Activated CD8-positive, alpha-beta T cell treated with anti-CD3 and anti-CD28 coated beads for 36 hours (primary cell): ENCODE measurements at regions of chr17 and their contacts with region 1.

Region 1: DNA sequence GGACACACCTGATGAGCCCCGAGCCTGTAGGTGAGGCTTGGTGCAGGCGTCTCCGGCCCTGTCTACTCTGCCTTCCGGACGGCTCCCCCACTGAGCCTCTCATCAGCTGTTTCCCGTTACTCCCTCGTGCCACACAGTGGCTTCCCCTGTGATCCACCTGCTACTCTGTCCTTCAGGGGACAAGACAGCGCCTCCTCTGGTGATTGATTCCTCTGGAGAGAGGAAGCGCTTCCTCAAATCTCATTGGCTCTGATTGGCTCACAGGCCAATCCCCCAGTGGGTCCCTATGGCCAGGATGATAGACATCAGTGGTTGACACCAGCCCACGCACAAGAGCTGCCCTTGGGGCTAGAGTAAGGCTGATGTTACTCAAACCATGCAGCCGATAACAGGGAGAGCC is 24.0 kb downstream of the RNF213 start:
- DNase-seq: no peak
- ATAC-seq: no peak
- H3K4me3 Mint-ChIP-seq: no peak overlapping the region
- H3K27ac Mint-ChIP-seq: peak overlapping the region; percentile 53
- H3K4me1 Mint-ChIP-seq: peaks cover 23% of the 10 kb centered on the region
- H3K27me3 Mint-ChIP-seq: no peaks in the 10 kb centered on the region
- CTCF ChIP-seq: no peak

Region 2: GRCh38 chr17:80270836-80271235 is 13.8 kb before region 1 on chr17:
- CTCF ChIA-PET with region 1: no interaction called
- POLR2A ChIA-PET with region 1: interaction called, 11 read pairs
- intact Hi-C with region 1: no loop called
- DNase-seq: peak; percentile 61
- ATAC-seq: peak; percentile 83
- H3K4me3 Mint-ChIP-seq: no peak overlapping the region
- H3K27ac Mint-ChIP-seq: peak overlapping the region; percentile 63
- H3K4me1 Mint-ChIP-seq: peaks cover 32% of the 10 kb centered on the region
- H3K27me3 Mint-ChIP-seq: no peaks in the 10 kb centered on the region
- CTCF ChIP-seq: no peak